Transverse colon (tissue), 4 donors: ENCODE measurements at regions of chr2 and their contacts with region 1.

Region 1: DNA sequence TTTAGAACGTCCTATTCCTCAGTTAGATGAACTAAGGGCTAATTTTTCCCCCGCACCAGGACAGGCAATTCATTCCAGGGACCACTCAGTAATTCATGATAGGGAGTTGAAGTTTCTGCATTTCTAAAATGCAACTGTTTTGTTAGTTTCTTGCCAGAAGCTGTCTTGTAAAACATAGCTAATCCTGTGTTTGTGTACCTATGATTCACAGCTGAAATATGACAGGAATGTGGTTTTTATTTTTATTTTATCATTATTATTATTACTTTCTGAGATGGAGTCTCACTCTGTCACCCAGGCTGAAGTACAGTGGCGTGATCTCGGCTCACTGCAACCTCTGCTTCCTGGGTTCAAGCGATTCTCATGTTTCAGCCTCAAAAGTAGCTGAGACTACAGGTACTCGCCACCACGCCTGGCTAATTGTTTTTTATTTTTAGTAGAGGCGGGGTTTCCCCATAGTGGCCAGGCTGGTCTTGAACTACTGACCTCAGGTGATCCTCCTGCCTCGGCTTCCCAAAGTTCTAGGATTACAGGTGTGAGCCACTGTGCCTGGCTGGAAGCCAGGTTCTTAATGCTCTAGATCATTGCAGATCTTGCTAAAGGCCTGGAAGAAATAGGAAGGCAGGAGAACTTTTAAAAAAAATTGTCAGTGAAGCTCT is 154.8 kb upstream of the FHL2 start:
- DNase-seq: no peak
- H3K4me3 ChIP-seq: no peak overlapping the region
- H3K27ac ChIP-seq: no peak overlapping the region
- H3K4me1 ChIP-seq: no peaks in the 10 kb centered on the region
- H3K27me3 ChIP-seq: peaks cover 15% of the 10 kb centered on the region
- CTCF ChIP-seq: no peak
- EP300 ChIP-seq: no peak
- POLR2A ChIP-seq: no peak

Region 2: DNA sequence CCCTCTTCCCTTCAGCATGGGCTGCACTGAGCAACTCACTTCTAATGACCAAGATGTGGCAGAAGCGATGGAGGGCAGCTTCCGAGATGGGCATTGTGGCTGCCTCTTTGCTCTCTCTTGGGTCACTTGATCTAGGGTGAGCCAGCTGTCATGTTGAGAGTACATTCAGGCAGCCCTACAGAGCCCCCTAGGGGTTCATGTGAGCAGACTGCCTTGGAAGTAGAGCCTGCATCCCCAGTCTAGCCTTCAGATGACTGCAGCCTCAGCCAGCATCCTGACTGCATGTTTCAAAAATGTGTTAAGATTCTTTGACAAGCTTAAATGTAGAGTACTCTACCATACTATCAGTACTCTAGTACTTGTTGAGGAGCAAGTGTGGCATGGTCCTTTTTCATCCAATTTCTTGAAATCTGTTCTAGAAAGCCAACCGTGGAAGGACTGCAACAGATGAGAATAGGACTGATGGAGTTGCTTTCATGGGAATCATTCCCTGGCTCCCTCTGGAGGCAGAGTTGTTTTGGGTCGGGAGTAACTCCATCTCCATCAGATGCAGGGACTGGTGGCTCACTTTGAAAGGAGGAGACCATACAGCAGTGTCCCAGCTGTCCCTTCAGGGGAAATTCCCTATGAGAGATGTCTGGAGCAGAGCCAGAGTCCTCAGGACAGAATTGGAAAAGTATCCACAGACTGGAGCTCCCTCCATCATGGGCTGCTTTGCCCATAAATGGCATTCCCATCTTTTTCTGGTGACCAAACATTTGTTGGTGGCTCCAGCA is 335.1 kb after region 1 on chr2:
- in situ Hi-C with region 1: loop called in 1 of 4 experiments (anchors 25 kb)
- intact Hi-C with region 1: no loop called
- DNase-seq: no peak
- H3K4me3 ChIP-seq: no peak overlapping the region
- H3K27ac ChIP-seq: no peak overlapping the region
- H3K4me1 ChIP-seq: peaks cover 10 to 31% (median 12%) of the 10 kb centered on the region in 4 donors
- H3K27me3 ChIP-seq: no peaks in the 10 kb centered on the region
- CTCF ChIP-seq: no peak
- EP300 ChIP-seq: no peak
- POLR2A ChIP-seq: no peak